Calu3 (cell line): ENCODE measurements at regions of chr2 and their contacts with region 1.

Region 1: GRCh38 chr2:64173156-64174135 is 29.2 kb upstream of the PELI1 start:
- DNase-seq: no peak
- H3K4me3 Mint-ChIP-seq: no peak overlapping the region
- H3K27ac Mint-ChIP-seq: no peak overlapping the region
- H3K4me1 Mint-ChIP-seq: no peaks in the 10 kb centered on the region
- H3K27me3 Mint-ChIP-seq: no peaks in the 10 kb centered on the region
- CTCF ChIP-seq: no peak

Region 2: DNA sequence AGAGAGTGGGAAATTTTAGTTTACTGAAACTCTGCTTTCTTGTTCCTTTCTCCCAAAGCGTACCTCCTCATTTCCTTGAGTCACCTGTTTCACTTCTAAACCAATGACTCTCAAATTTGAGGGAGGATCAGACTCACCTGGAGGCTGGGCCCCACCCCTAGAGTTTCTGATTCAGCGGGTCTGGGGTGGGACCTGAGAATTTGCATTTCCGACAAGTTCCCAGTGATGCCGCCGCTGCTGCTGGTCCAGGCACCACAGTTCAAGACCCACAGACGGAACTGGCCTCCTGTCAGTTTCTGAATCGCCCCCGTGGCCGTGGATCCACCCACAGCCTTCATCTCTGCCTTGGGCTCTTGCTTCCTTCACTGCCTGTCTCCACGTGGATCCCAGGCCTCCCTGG is 15.7 kb after region 1 on chr2:
- CTCF ChIA-PET with region 1: interaction called, 3 read pairs
- intact Hi-C with region 1: loop called (anchors 2 kb)
- DNase-seq: no peak
- H3K4me3 Mint-ChIP-seq: no peak overlapping the region
- H3K27ac Mint-ChIP-seq: no peak overlapping the region
- H3K4me1 Mint-ChIP-seq: no peaks in the 10 kb centered on the region
- H3K27me3 Mint-ChIP-seq: no peaks in the 10 kb centered on the region
- CTCF ChIP-seq: no peak

Region 3: GRCh38 chr2:64202206-64202845 is 28.9 kb after region 1 on chr2:
- CTCF ChIA-PET with region 1: no interaction called
- intact Hi-C with region 1: no loop called
- DNase-seq: no peak
- H3K4me3 Mint-ChIP-seq: no peak overlapping the region
- H3K27ac Mint-ChIP-seq: peak overlapping the region; percentile 99
- H3K4me1 Mint-ChIP-seq: peaks cover 19% of the 10 kb centered on the region
- H3K27me3 Mint-ChIP-seq: no peaks in the 10 kb centered on the region
- CTCF ChIP-seq: no peak

Region 4: GRCh38 chr2:64243081-64244036 is 69.9 kb after region 1 on chr2:
- CTCF ChIA-PET with region 1: no interaction called
- intact Hi-C with region 1: no loop called
- DNase-seq: no peak
- H3K4me3 Mint-ChIP-seq: no peak overlapping the region
- H3K27ac Mint-ChIP-seq: no peak overlapping the region
- H3K4me1 Mint-ChIP-seq: peaks cover 7% of the 10 kb centered on the region
- H3K27me3 Mint-ChIP-seq: no peaks in the 10 kb centered on the region
- CTCF ChIP-seq: no peak